ENCODE measurements at regions of chr7 and their contacts with region 1.

Region 1: DNA sequence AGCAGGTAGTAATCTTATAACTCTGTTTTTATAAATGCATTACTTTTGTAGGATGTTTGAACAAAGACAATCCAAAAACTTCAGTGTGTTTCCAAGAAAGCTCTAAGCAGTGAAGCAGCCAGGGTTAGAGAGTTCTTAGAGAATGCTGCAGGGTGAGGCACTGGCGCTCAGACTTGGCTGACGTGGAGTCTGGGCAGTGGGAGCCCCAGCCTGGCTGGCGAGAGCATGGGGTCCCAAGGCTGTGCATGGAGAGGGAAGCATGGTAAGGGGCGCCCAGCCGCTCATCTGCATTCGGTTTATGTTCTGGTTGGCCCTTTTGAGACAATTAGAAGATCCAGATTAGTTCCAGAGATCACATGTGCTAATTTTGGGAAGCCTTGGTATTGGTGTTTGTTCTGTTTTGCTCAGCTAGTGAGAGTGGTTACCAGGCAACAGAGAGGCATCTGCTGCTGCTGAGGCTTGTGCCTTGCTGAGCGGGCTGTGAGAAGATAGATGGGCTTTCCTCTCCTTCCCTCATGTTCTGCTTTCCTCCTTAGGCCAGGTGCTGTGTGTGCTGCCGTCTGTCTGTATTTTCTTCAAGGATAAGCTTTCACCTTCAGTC is 10.3 kb downstream of the SUN1 start:
- DNase-seq: no peak
- H3K4me3 ChIP-seq: no peak overlapping the region
- H3K27ac ChIP-seq: no peak overlapping the region
- H3K4me1 ChIP-seq: no peaks in the 10 kb centered on the region
- H3K27me3 ChIP-seq: no peaks in the 10 kb centered on the region
- CTCF ChIP-seq: no peak

Region 2: GRCh38 chr7:2540641-2541051 is 1698.1 kb after region 1 on chr7:
- CTCF ChIA-PET with region 1: no interaction called
- POLR2A ChIA-PET with region 1: no interaction called
- intact Hi-C with region 1: loop called (anchors 10 kb)
- DNase-seq: no peak
- H3K4me3 ChIP-seq: no peak overlapping the region
- H3K27ac ChIP-seq: no peak overlapping the region
- H3K4me1 ChIP-seq: no peaks in the 10 kb centered on the region
- H3K27me3 ChIP-seq: no peaks in the 10 kb centered on the region
- CTCF ChIP-seq: no peak

Measured in PC-9 (cell line).